ENCODE measurements at regions of chr5 and their contacts with region 1.

Region 1: DNA sequence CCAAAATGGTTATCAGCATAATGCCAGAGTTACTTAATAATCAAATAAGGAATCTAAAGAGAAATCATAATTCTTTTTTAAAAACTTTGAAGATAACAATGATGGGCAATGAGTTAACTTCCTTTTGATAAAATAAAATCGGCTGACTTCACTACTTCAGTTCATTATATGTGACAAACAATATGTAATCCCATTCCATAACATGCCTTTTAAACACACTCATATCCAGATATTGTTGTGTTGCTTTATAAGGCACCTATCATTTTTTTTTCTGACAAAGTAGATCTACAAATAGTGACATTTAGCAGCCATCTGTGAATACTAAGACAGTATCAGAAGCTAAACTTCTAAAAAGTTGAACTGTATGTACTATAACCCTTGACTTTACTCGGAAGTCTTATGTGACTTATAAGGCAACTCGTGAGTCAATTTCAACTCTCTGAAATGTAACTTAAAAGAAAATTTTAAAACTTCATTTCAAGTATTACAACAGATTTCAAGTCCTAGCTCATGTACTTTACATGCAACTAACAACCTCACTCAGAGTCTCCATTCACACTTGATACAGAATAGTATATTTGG is 7.5 kb downstream of the ADAMTS6 start:
- DNase-seq: no peak
- ATAC-seq: no peak
- H3K4me3 ChIP-seq: no peak overlapping the region
- H3K27ac ChIP-seq: no peak overlapping the region
- H3K4me1 ChIP-seq: no peaks in the 10 kb centered on the region
- H3K27me3 ChIP-seq: no peaks in the 10 kb centered on the region
- CTCF ChIP-seq: no peak
- EP300 ChIP-seq: no peak
- POLR2A ChIP-seq: no peak
- RAD21 ChIP-seq: no peak

Region 2: GRCh38 chr5:65394087-65394486 is 80.1 kb before region 1 on chr5:
- CTCF ChIA-PET with region 1: no interaction called
- POLR2A ChIA-PET with region 1: no interaction called
- RAD21 ChIA-PET with region 1: no interaction called
- SMC1A ChIA-PET with region 1: no interaction called
- in situ Hi-C with region 1: no loop called
- intact Hi-C with region 1: no loop called
- DNase-seq: no peak
- ATAC-seq: no peak
- H3K4me3 ChIP-seq: no peak overlapping the region
- H3K27ac ChIP-seq: no peak overlapping the region
- H3K4me1 ChIP-seq: no peaks in the 10 kb centered on the region
- H3K27me3 ChIP-seq: no peaks in the 10 kb centered on the region
- CTCF ChIP-seq: no peak
- EP300 ChIP-seq: no peak
- POLR2A ChIP-seq: no peak
- RAD21 ChIP-seq: no peak

Region 3: GRCh38 chr5:66669086-66669861 is 1195.1 kb after region 1 on chr5:
- CTCF ChIA-PET with region 1: no interaction called
- POLR2A ChIA-PET with region 1: interaction called, 11 read pairs
- RAD21 ChIA-PET with region 1: no interaction called
- SMC1A ChIA-PET with region 1: no interaction called
- in situ Hi-C with region 1: no loop called
- intact Hi-C with region 1: no loop called
- DNase-seq: no peak
- ATAC-seq: no peak
- H3K4me3 ChIP-seq: no peak overlapping the region
- H3K27ac ChIP-seq: no peak overlapping the region
- H3K4me1 ChIP-seq: no peaks in the 10 kb centered on the region
- H3K27me3 ChIP-seq: no peaks in the 10 kb centered on the region; a peak in 2 of 4 replicates
- CTCF ChIP-seq: no peak
- EP300 ChIP-seq: no peak
- POLR2A ChIP-seq: no peak
- RAD21 ChIP-seq: no peak

Measured in GM12878 (cell line).